Activated CD8-positive, alpha-beta T cell treated with anti-CD3 and anti-CD28 coated beads, Interleukin-2, amount 10 ng/mL, durations not matched to agents 7 days and 5 days (primary cell): ENCODE measurements at regions of chr20 and their contacts with region 1.

Region 1: GRCh38 chr20:5529331-5530148 is 212.8 kb upstream of the PROKR2 start:
- DNase-seq: peak; percentile 92
- ATAC-seq: peak; percentile 92
- H3K4me3 Mint-ChIP-seq: peak overlapping the region; percentile 21
- H3K27ac Mint-ChIP-seq: peak overlapping the region; percentile 69
- H3K4me1 Mint-ChIP-seq: peaks cover 25% of the 10 kb centered on the region
- H3K27me3 Mint-ChIP-seq: no peaks in the 10 kb centered on the region

Region 2: GRCh38 chr20:5550733-5551529 is 21.4 kb after region 1 on chr20:
- CTCF ChIA-PET with region 1: interaction called, 38 read pairs
- POLR2A ChIA-PET with region 1: no interaction called
- DNase-seq: no peak
- ATAC-seq: peak; percentile 42
- H3K4me3 Mint-ChIP-seq: no peak overlapping the region
- H3K27ac Mint-ChIP-seq: no peak overlapping the region
- H3K4me1 Mint-ChIP-seq: no peaks in the 10 kb centered on the region
- H3K27me3 Mint-ChIP-seq: no peaks in the 10 kb centered on the region

Region 3: DNA sequence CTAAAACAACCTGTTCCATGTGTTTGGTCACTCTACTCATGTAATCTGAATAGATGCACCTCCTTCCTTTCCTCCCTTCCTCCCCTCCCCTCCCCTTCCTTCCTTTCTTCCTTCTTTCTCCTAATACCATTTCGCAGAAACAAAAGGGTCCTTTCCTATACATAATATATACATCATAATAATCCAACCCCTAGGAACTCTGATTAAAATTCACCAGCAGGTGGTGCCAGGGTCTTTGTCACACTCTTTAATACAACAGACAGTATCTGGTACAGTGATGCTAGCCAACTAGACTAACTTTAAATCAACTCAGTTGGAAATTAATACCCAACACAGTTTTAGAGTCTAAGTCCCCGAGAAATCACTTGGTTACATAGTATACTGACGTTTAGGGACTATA is 39.5 kb after region 1 on chr20:
- CTCF ChIA-PET with region 1: interaction called, 26 read pairs
- POLR2A ChIA-PET with region 1: no interaction called
- DNase-seq: peak; percentile 68
- ATAC-seq: peak; percentile 87
- H3K4me3 Mint-ChIP-seq: no peak overlapping the region
- H3K27ac Mint-ChIP-seq: peak overlapping the region; percentile 37
- H3K4me1 Mint-ChIP-seq: peaks cover 15% of the 10 kb centered on the region
- H3K27me3 Mint-ChIP-seq: no peaks in the 10 kb centered on the region

Region 4: DNA sequence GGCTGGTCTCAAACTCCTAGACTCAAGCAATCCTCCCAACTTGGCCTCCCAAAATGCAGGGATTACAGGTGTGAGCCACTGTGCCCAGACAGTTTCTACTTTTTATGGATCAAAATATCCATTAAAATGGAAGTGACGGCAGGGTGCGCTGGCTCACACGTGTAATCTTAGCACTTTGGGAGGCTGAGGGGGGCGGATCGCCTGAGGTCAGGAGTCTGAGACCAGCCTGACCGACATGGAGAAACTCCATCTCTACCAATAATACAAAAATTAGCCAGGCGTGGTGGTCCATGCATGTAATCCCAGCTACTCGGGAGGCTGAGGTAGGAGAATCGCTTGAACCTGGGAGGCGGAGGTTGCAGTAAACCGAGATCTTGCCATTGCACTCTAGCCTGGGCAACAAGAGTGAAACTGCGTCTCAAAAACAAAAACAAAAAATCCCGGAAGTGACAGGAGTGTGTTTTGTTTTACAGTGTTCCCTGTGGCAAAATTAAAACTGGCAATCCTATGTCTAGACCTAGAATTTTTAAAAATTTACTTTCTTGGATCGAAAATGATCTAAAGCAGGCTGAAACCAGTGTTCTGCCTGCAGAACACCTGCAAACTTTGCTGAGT is 104.3 kb after region 1 on chr20:
- CTCF ChIA-PET with region 1: no interaction called
- POLR2A ChIA-PET with region 1: no interaction called
- DNase-seq: no peak
- ATAC-seq: no peak
- H3K4me3 Mint-ChIP-seq: no peak overlapping the region
- H3K27ac Mint-ChIP-seq: no peak overlapping the region
- H3K4me1 Mint-ChIP-seq: no peaks in the 10 kb centered on the region
- H3K27me3 Mint-ChIP-seq: no peaks in the 10 kb centered on the region

Region 5: GRCh38 chr20:5779071-5779900 is 249.7 kb after region 1 on chr20:
- CTCF ChIA-PET with region 1: interaction called, 157 read pairs
- POLR2A ChIA-PET with region 1: no interaction called
- DNase-seq: no peak
- ATAC-seq: no peak
- H3K4me3 Mint-ChIP-seq: no peak overlapping the region
- H3K27ac Mint-ChIP-seq: no peak overlapping the region
- H3K4me1 Mint-ChIP-seq: peaks cover 2% of the 10 kb centered on the region
- H3K27me3 Mint-ChIP-seq: no peaks in the 10 kb centered on the region

Region 6: DNA sequence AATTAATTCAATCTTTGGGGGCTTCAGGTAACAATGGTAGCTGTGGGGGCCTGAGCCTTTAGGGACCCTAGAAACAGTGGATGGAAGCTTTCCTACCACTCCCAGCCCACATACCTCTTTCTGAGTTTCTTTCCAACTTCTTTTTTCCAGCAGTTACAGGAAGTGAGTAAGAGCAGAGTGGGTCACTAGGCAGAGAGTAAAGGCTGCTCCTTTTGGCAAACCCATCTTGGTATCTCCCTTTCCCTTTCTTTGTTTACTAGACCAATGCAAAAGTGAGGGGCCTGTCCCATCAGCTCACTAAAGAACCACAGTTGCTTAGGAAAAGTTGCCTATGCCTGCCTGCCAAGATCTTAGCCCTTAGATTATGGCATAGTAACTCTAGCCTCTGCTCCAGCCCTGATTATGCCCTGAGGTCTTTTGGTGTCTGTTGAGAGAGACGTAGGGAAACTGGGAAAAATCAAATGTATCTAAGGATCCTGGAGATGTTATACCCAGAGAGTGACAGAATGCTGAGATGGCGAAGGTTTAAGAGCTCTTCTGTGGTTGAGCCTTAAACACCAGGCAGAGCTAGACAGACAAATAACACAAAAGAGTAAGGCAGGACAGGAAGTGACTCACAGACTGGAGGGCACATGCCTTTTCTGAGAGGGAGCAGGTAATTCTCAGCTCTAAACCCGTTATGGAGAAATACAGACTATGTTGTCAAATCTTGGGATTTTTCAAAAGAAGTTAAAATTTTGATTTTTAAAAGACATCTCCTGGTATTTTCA is 389.5 kb after region 1 on chr20:
- CTCF ChIA-PET with region 1: interaction called, 13 read pairs
- POLR2A ChIA-PET with region 1: no interaction called
- DNase-seq: peak; percentile 36
- ATAC-seq: peak; percentile 89
- H3K4me3 Mint-ChIP-seq: no peak overlapping the region
- H3K27ac Mint-ChIP-seq: no peak overlapping the region
- H3K4me1 Mint-ChIP-seq: peaks cover 18% of the 10 kb centered on the region
- H3K27me3 Mint-ChIP-seq: peaks cover 15% of the 10 kb centered on the region

Region 7: DNA sequence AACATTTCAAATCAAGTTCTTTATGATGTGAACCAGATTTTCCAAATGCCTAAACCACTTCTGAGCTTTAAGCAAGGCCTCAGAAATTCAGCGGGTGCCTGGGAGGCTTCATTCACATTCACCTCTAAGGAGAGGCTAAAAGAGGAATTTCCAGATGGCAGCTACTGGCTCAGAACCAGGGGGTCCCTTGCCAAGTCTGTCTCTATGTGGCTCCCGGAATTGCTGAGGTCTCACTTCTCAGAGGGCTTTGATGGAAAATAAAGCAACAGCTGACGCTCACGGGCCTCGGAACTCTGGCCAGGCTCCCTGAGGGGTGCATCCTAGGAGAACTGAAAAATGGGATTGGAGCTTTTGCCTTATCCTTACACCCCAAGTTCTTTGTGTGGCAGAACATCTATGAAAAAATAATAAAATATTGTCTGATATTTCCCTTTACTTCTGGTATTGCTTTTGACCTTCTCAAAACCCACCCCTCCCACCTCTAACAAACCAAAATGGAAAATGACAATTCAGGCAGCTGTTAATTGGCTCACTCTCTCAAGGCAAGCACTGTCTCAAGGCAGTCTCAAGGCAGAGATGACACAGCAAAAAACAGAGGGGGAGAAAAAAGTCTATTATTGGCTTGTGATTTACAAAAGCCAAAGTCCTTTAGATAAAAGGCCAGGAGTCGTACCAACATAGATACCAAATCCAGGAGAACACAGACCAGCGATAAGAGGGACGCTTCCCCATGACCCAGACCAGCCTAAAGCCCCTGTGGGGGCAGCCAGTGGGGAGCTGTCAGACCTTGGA is 546.1 kb after region 1 on chr20:
- CTCF ChIA-PET with region 1: interaction called, 39 read pairs
- POLR2A ChIA-PET with region 1: no interaction called
- DNase-seq: no peak
- ATAC-seq: no peak
- H3K4me3 Mint-ChIP-seq: no peak overlapping the region
- H3K27ac Mint-ChIP-seq: no peak overlapping the region
- H3K4me1 Mint-ChIP-seq: no peaks in the 10 kb centered on the region
- H3K27me3 Mint-ChIP-seq: peaks cover 6% of the 10 kb centered on the region